Activated CD8-positive, alpha-beta T cell treated with anti-CD3 and anti-CD28 coated beads, Interleukin-2, amount 10 ng/mL, durations not matched to agents 7 days and 5 days (primary cell): ENCODE measurements at regions of chr12 and their contacts with region 1.

Region 1: DNA sequence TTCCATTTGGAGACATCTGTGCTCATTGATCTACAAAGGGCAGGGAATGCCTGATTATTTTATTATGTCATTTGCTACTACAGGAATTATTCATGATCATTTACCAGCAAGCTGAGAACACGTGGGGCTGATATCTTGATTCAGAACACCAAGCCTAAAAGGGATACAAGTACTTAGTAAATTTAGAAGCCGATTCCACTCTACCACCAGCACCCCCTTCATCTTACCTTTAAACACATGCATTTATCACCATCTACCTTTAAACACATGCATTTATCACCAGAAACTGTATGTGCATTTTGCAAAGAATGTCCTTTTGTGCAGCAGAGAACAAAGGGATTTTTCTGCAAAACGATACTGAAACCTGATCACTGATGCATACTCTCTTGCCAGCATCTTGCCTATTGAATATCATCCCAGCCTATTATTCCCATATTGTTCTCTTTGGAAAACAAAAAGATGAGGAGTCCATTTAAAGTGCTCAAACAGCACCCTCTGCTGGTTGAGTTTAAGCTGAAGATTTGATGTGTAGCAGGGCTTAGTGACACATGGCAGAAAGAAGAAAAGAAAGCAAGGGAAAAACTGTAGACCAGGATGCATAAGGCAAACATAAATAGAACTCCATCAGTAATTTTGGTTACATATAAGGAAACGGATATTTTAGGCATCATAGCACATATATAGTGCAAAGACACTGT is 132.6 kb upstream of the PLEKHG7 start:
- DNase-seq: peak; percentile 71
- ATAC-seq: peak; percentile 85
- H3K4me3 Mint-ChIP-seq: no peak overlapping the region
- H3K27ac Mint-ChIP-seq: no peak overlapping the region
- H3K4me1 Mint-ChIP-seq: peaks cover 12% of the 10 kb centered on the region
- H3K27me3 Mint-ChIP-seq: no peaks in the 10 kb centered on the region

Region 2: DNA sequence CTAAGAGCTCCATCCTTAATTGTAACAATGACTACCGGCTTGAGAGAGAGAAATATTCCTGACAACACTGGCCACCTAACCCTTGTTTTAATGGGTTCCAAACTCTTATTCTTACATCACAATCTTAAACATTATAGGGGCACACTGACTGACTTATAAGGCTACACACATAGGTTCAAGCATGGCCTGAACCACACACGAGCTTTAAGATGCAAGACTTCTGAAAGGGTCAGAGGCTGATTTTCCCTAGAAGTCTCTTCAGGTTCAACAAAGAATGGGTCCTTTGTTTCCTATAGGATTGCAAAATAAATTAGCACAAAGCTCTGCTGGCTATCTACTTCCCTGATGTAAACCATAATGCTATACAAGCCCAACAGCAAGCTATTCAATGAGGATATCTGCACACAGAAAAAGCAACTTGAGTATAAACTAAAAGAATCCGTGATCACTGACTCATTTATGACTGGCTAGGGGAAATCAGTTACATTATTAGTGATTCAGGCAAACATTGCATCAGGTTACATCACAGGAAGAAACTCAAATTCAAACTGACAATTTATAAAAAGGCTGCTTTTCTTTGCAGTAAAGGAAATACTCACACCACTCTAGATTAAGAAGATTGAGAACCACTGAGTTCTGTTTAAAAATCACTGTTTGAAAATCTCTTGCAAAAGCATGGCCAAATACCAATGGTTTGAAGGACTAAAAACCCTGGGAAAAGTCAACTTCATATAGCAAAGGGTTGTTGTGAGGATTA is 433.1 kb before region 1 on chr12:
- CTCF ChIA-PET with region 1: interaction called, 12 read pairs
- POLR2A ChIA-PET with region 1: no interaction called
- DNase-seq: no peak
- ATAC-seq: no peak
- H3K4me3 Mint-ChIP-seq: peak overlapping the region; percentile 100
- H3K27ac Mint-ChIP-seq: peak overlapping the region; percentile 86
- H3K4me1 Mint-ChIP-seq: peaks cover 71% of the 10 kb centered on the region
- H3K27me3 Mint-ChIP-seq: no peaks in the 10 kb centered on the region

Region 3: GRCh38 chr12:92398565-92399309 is 171.5 kb before region 1 on chr12:
- CTCF ChIA-PET with region 1: interaction called, 12 read pairs
- POLR2A ChIA-PET with region 1: interaction called, 3 read pairs
- DNase-seq: peak; percentile 38
- ATAC-seq: peak; percentile 83
- H3K4me3 Mint-ChIP-seq: peak overlapping the region; percentile 57
- H3K27ac Mint-ChIP-seq: peak overlapping the region; percentile 88
- H3K4me1 Mint-ChIP-seq: peaks cover 85% of the 10 kb centered on the region
- H3K27me3 Mint-ChIP-seq: no peaks in the 10 kb centered on the region

Region 4: DNA sequence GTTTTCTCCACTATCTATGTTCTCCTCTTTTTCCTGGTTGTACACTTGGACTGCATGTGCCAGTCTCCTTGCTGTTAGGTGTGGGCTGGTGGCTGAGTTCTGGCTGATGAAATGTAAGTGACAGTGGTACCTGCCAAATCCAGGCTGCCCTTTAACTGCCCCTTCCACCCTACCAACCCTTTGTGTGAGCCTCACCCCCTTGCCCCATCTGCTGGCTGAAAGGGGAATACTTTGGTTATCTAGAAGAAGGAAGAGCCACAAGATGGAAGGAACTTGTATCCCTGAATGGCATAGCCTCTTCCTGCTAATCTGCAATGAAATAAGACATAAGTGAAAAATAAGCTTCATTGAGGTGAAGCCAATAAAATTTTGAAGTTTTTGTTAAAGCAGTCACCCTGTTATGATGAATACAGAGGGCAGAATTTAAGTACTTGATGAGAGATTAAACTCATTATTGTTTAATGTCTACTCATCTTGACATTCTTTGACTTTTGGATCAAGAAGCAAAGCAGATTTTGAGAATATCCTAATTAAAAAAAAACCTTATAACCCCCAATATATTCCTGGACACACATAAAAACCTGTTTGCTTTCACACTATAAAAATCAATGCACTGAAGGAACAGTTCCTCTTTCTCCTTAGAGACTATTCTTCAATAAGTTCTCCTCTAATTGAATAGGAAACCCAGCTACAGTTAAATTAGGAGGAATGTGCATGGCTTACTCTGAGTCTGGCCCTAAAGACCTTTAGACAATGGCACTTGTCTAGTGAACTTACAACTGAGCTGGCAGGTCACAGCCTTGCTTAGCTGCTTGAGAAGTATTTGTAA is 161.9 kb before region 1 on chr12:
- CTCF ChIA-PET with region 1: interaction called, 25 read pairs
- POLR2A ChIA-PET with region 1: interaction called, 3 read pairs
- DNase-seq: peak; percentile 74
- ATAC-seq: peak; percentile 24
- H3K4me3 Mint-ChIP-seq: no peak overlapping the region
- H3K27ac Mint-ChIP-seq: no peak overlapping the region
- H3K4me1 Mint-ChIP-seq: peaks cover 46% of the 10 kb centered on the region
- H3K27me3 Mint-ChIP-seq: no peaks in the 10 kb centered on the region

Region 5: GRCh38 chr12:92505254-92506231 is 64.7 kb before region 1 on chr12:
- CTCF ChIA-PET with region 1: interaction called, 44 read pairs
- POLR2A ChIA-PET with region 1: no interaction called
- DNase-seq: peak; percentile 56
- ATAC-seq: peak; percentile 70
- H3K4me3 Mint-ChIP-seq: peak overlapping the region; percentile 69
- H3K27ac Mint-ChIP-seq: peak overlapping the region; percentile 92
- H3K4me1 Mint-ChIP-seq: peaks cover 44% of the 10 kb centered on the region
- H3K27me3 Mint-ChIP-seq: no peaks in the 10 kb centered on the region

Region 6: GRCh38 chr12:92556141-92556540 is 14.1 kb before region 1 on chr12:
- CTCF ChIA-PET with region 1: interaction called, 16 read pairs
- POLR2A ChIA-PET with region 1: interaction called, 3 read pairs
- DNase-seq: no peak
- ATAC-seq: peak; percentile 67
- H3K4me3 Mint-ChIP-seq: peak overlapping the region; percentile 57
- H3K27ac Mint-ChIP-seq: peak overlapping the region; percentile 77
- H3K4me1 Mint-ChIP-seq: peaks cover 40% of the 10 kb centered on the region
- H3K27me3 Mint-ChIP-seq: no peaks in the 10 kb centered on the region

Region 7: DNA sequence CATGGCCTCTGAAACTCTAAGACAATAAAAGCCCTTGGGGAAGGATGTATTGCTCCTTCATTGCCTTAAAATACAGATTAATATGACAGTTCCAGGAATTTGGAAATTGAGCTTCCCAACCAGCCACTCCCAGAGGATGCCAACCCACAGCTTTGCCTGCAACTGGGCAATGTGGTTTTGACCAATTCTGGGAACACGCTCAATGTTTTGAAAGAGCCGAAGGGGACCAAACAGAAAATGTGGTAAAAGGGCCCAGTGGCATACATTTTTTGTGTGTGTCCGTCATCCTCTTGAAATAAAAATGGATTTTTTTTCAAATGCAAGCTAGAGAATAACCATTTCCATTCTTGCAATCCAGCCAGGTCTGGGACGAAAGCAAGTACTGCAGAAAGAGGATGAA is 44.3 kb after region 1 on chr12:
- CTCF ChIA-PET with region 1: no interaction called
- POLR2A ChIA-PET with region 1: no interaction called
- DNase-seq: no peak
- ATAC-seq: no peak
- H3K4me3 Mint-ChIP-seq: no peak overlapping the region
- H3K27ac Mint-ChIP-seq: no peak overlapping the region
- H3K4me1 Mint-ChIP-seq: no peaks in the 10 kb centered on the region
- H3K27me3 Mint-ChIP-seq: no peaks in the 10 kb centered on the region

Region 8: DNA sequence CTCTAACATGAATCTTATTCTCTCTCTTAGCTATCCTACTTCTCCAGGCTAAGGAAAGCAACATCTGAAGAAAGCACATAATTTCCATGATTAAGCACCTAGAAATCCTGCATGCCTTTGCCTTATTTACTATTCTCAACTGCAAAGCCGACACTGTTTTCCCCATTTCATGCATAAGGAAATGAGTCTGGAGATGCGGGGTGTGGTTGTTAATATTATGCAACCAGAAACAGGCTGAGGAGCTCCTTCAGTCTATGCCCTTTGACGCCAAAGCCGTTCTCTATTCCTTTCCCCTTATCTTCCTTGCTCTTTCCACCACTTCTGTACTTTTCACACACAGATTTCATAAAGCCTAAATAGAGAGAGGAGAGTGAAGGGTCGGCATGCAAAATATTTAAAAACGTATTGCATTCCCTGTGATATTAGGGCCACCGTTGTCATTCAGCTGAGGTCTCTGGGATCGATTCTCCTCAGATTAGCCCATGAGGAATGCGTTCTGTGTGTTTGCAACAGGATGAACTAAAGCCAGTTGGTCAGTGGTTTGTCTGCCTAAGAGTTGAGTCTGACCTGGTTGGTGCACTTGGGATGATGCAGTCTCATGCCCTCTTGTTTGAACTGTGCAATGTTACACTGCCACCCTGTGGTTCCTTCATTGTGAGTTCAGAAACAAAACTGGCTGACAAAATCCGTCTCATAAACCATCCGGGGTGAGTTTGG is 79.5 kb after region 1 on chr12:
- CTCF ChIA-PET with region 1: interaction called, 14 read pairs
- POLR2A ChIA-PET with region 1: no interaction called
- DNase-seq: peak; percentile 72
- ATAC-seq: peak; percentile 84
- H3K4me3 Mint-ChIP-seq: no peak overlapping the region
- H3K27ac Mint-ChIP-seq: no peak overlapping the region
- H3K4me1 Mint-ChIP-seq: no peaks in the 10 kb centered on the region
- H3K27me3 Mint-ChIP-seq: no peaks in the 10 kb centered on the region